MCF 10A (cell line): ENCODE measurements at regions of chr20 and their contacts with region 1.

Region 1: GRCh38 chr20:9903048-9903655 is 64.3 kb upstream of the PAK5 start:
- DNase-seq: peak; percentile 25
- H3K4me3 Mint-ChIP-seq: no peak overlapping the region
- H3K27ac Mint-ChIP-seq: no peak overlapping the region
- H3K4me1 Mint-ChIP-seq: no peaks in the 10 kb centered on the region
- H3K27me3 Mint-ChIP-seq: peaks cover 35% of the 10 kb centered on the region
- CTCF ChIP-seq: peak; percentile 32

Region 2: GRCh38 chr20:9280666-9281065 is 622.5 kb before region 1 on chr20:
- CTCF ChIA-PET with region 1: no interaction called
- POLR2A ChIA-PET with region 1: no interaction called
- intact Hi-C with region 1: no loop called
- DNase-seq: no peak
- H3K4me3 Mint-ChIP-seq: no peak overlapping the region
- H3K27ac Mint-ChIP-seq: no peak overlapping the region
- H3K4me1 Mint-ChIP-seq: peaks cover 7% of the 10 kb centered on the region
- H3K27me3 Mint-ChIP-seq: no peaks in the 10 kb centered on the region
- CTCF ChIP-seq: no peak

Region 3: GRCh38 chr20:9817654-9818053 is 85.5 kb before region 1 on chr20:
- CTCF ChIA-PET with region 1: no interaction called
- POLR2A ChIA-PET with region 1: no interaction called
- intact Hi-C with region 1: no loop called
- DNase-seq: no peak
- H3K4me3 Mint-ChIP-seq: no peak overlapping the region
- H3K27ac Mint-ChIP-seq: no peak overlapping the region
- H3K4me1 Mint-ChIP-seq: no peaks in the 10 kb centered on the region
- H3K27me3 Mint-ChIP-seq: no peaks in the 10 kb centered on the region
- CTCF ChIP-seq: no peak

Region 4: GRCh38 chr20:9889270-9889981 is 13.7 kb before region 1 on chr20:
- CTCF ChIA-PET with region 1: interaction called, 26 read pairs
- POLR2A ChIA-PET with region 1: no interaction called
- intact Hi-C with region 1: no loop called
- DNase-seq: peak; percentile 17
- H3K4me3 Mint-ChIP-seq: peak overlapping the region; percentile 35
- H3K27ac Mint-ChIP-seq: no peak overlapping the region
- H3K4me1 Mint-ChIP-seq: peaks cover 6% of the 10 kb centered on the region
- H3K27me3 Mint-ChIP-seq: no peaks in the 10 kb centered on the region
- CTCF ChIP-seq: no peak